Calu3 (cell line): ENCODE measurements at regions of chr17 and their contacts with region 1.

Region 1: GRCh38 chr17:12789777-12790609 is 695 bp downstream of the ARHGAP44 start:
- DNase-seq: peak; percentile 16
- H3K4me3 Mint-ChIP-seq: peak overlapping the region; percentile 99
- H3K27ac Mint-ChIP-seq: peak overlapping the region; percentile 68
- H3K4me1 Mint-ChIP-seq: peaks cover 27% of the 10 kb centered on the region
- H3K27me3 Mint-ChIP-seq: peaks cover 17% of the 10 kb centered on the region
- CTCF ChIP-seq: no peak

Region 2: GRCh38 chr17:12659500-12659899 is 130.5 kb before region 1 on chr17:
- CTCF ChIA-PET with region 1: no interaction called
- intact Hi-C with region 1: no loop called
- DNase-seq: no peak
- H3K4me3 Mint-ChIP-seq: no peak overlapping the region
- H3K27ac Mint-ChIP-seq: no peak overlapping the region
- H3K4me1 Mint-ChIP-seq: no peaks in the 10 kb centered on the region
- H3K27me3 Mint-ChIP-seq: peaks cover 26% of the 10 kb centered on the region
- CTCF ChIP-seq: no peak

Region 3: GRCh38 chr17:12866244-12866643 is 76.3 kb after region 1 on chr17:
- CTCF ChIA-PET with region 1: no interaction called
- intact Hi-C with region 1: no loop called
- DNase-seq: no peak
- H3K4me3 Mint-ChIP-seq: no peak overlapping the region
- H3K27ac Mint-ChIP-seq: no peak overlapping the region
- H3K4me1 Mint-ChIP-seq: no peaks in the 10 kb centered on the region
- H3K27me3 Mint-ChIP-seq: no peaks in the 10 kb centered on the region
- CTCF ChIP-seq: no peak

Region 4: DNA sequence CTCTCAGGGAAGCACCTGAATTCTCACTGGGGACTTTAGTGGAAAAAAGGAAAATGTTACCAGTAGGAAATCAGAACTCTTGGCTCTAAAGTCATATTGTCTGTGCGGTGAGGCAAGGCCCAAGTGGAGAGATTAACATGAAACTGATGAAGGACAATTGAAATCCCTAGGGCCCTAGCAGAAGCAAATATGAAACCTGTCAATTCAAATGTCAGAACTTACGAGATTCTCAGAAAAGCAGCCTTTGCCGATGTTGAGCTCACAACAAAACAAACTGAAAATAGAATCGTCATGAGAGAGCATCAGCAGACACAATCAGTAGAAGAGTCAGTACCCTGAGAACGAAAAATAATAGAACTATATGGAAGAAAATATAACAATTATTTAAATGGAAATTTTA is 119.1 kb after region 1 on chr17:
- CTCF ChIA-PET with region 1: no interaction called
- intact Hi-C with region 1: loop called (anchors 10 kb)
- DNase-seq: no peak
- H3K4me3 Mint-ChIP-seq: no peak overlapping the region
- H3K27ac Mint-ChIP-seq: no peak overlapping the region
- H3K4me1 Mint-ChIP-seq: no peaks in the 10 kb centered on the region
- H3K27me3 Mint-ChIP-seq: no peaks in the 10 kb centered on the region
- CTCF ChIP-seq: no peak

Region 5: DNA sequence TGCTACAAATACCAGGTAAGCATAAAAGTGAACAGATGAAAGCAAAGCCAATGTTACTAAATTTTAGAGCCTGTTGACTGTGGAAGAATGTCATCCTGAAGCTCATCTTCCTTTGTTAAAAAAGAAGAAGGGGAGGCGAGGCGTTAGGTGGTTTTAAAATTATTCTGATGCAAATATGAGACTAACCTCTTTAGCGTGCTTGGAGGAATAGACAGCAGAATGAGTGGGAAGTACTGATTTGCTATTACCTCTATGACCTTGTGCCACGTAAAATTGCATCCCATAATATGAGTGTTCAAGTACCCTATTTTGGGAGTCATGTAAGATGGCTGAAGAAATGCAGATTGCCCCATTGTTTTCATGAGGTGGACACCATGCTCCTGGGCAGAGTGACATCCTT is 132.1 kb after region 1 on chr17:
- CTCF ChIA-PET with region 1: no interaction called
- intact Hi-C with region 1: no loop called
- DNase-seq: no peak
- H3K4me3 Mint-ChIP-seq: no peak overlapping the region
- H3K27ac Mint-ChIP-seq: no peak overlapping the region
- H3K4me1 Mint-ChIP-seq: no peaks in the 10 kb centered on the region
- H3K27me3 Mint-ChIP-seq: no peaks in the 10 kb centered on the region
- CTCF ChIP-seq: no peak